ENCODE measurements at regions of chr5 and their contacts with region 1.

Region 1: GRCh38 chr5:132490486-132491367 is at the start of gene IRF1:
- DNase-seq: peak; percentile 99
- H3K4me3 Mint-ChIP-seq: peak within 1 kb of the TSS; percentile 87
- H3K27ac Mint-ChIP-seq: peak within 1 kb of the TSS; percentile 84
- H3K4me1 Mint-ChIP-seq: peaks cover 50% of the 10 kb centered on the region
- H3K27me3 Mint-ChIP-seq: no peaks in the 10 kb centered on the region
- CTCF ChIP-seq: peak; percentile 11
- total RNA-seq, gene IRF1: 18.7 and 23.0 TPM in 2 replicates

Region 2: DNA sequence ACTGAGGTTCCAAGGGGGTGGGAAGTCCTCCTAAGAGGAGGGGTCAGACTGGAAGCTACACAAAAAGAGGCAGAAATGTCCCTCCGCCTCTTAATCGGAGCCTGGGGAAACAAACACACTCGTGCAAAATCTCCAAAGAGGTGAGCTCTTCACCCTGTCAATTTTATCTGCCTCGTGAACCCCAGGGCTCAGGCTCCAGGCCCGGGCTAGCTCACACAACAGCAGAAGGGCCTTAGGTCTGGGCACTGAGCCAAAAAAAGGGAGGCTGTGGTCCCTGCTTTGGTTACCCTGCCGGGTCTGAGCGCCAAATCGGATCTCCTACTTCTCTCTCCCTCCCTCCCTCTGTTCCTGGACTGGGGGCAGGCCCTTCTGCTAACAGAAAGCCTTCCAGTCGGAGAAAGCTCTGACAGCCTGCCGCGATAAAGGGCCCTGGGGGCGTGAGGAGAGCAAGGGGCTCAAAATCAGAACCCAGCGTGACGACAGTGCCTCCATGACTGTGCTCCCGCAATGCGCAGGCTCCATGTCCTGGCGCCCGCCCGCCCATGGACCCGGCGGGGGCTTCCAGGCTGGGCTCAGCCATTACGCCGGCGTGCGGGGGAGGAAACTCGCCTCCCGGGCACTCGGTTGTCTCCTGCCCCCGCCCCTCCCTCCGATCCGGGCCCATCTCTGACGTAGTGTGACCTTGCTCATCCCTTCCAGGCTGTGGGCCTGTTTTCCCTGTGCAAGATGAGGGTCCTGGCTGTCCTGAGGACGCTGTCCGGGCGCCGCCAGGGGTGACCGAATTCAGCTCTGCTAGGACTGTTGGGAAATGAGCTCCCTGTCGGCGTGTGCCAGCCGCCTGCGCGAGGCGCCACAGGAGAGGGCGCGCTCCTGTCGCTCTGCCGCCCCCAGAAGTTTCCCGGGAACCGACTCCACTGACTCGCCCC is 197.4 kb before region 1 on chr5:
- CTCF ChIA-PET with region 1: interaction called, 3 read pairs
- POLR2A ChIA-PET with region 1: interaction called, 12 read pairs
- intact Hi-C with region 1: loop called (anchors 10 kb)
- DNase-seq: peak; percentile 91
- H3K4me3 Mint-ChIP-seq: peak overlapping the region; percentile 98
- H3K27ac Mint-ChIP-seq: peak overlapping the region; percentile 89
- H3K4me1 Mint-ChIP-seq: peaks cover 40% of the 10 kb centered on the region
- H3K27me3 Mint-ChIP-seq: no peaks in the 10 kb centered on the region
- CTCF ChIP-seq: peak; percentile 19

Region 3: DNA sequence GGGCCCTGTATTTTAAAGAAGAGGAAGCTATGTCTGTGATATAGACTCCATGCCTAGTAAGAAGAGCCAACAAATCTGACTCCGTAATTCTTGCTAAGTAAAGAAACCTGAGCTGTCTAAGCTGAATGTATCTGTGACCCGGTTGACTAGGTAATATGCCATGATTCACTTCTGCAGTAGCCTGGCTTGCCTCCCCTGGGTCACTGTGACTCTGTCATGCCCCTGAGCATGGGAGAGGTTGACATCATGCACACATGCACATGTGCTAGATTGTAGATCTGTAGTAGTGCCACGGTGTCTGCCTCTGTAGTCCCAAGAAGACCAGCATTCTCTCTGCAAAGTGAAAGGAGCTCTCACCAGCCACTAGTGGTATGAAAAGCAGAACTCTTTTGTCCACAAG is 112.1 kb before region 1 on chr5:
- CTCF ChIA-PET with region 1: interaction called, 359 read pairs
- POLR2A ChIA-PET with region 1: interaction called, 16 read pairs
- intact Hi-C with region 1: no loop called
- DNase-seq: no peak
- H3K4me3 Mint-ChIP-seq: no peak overlapping the region
- H3K27ac Mint-ChIP-seq: peak overlapping the region; percentile 58
- H3K4me1 Mint-ChIP-seq: peaks cover 57% of the 10 kb centered on the region
- H3K27me3 Mint-ChIP-seq: no peaks in the 10 kb centered on the region
- CTCF ChIP-seq: no peak

Region 4: GRCh38 chr5:132426525-132427138 is 64.1 kb before region 1 on chr5:
- CTCF ChIA-PET with region 1: interaction called, 19 read pairs
- POLR2A ChIA-PET with region 1: interaction called, 67 read pairs
- intact Hi-C with region 1: no loop called
- DNase-seq: peak; percentile 96
- H3K4me3 Mint-ChIP-seq: no peak overlapping the region
- H3K27ac Mint-ChIP-seq: peak overlapping the region; percentile 68
- H3K4me1 Mint-ChIP-seq: peaks cover 47% of the 10 kb centered on the region
- H3K27me3 Mint-ChIP-seq: no peaks in the 10 kb centered on the region
- CTCF ChIP-seq: peak; percentile 22

Region 5: DNA sequence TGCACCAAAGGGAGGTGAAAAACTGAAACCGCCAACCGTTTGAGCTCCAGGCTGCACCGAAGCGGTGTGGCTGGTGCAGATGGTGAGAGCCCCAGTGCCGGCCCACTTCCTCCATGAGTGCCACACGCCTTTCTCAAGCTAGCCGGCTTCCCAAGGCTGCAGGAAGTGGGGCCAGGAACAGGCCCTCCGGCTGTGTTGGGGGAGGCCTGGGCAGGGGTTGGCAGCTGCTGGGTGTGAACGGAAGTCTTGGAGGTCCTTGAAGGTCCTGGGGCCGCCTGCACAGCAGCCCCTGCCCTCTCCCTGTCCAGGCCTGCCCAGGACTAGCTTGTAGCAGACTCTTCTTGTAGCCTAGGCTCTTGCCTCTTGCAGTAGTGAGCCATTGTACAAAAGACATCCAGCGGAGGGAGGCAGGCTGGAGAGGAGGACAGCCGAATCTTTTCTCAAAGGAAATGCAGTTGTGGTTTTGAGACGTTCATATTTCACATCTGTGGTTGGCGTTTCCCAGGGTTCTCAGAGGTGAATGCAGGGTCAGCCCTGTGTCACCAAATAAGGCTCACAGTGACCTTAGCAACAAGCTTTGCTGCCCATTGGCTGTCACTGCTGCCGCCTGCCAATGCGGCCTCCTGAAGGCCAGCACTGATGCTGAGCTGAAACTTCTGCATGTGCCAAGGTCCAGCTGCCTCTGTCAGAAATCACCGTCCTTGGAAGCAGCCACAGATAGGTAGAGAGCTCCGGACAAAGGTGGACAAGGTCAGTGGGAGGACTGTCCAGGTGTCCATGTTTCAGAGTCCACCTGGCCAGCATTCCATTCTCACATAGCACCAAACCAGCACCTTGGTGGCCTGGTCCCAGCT is 24.1 kb before region 1 on chr5:
- CTCF ChIA-PET with region 1: interaction called, 6 read pairs
- POLR2A ChIA-PET with region 1: interaction called, 12 read pairs
- intact Hi-C with region 1: no loop called
- DNase-seq: no peak
- H3K4me3 Mint-ChIP-seq: no peak overlapping the region
- H3K27ac Mint-ChIP-seq: no peak overlapping the region
- H3K4me1 Mint-ChIP-seq: peaks cover 18% of the 10 kb centered on the region
- H3K27me3 Mint-ChIP-seq: no peaks in the 10 kb centered on the region
- CTCF ChIP-seq: no peak

Region 6: DNA sequence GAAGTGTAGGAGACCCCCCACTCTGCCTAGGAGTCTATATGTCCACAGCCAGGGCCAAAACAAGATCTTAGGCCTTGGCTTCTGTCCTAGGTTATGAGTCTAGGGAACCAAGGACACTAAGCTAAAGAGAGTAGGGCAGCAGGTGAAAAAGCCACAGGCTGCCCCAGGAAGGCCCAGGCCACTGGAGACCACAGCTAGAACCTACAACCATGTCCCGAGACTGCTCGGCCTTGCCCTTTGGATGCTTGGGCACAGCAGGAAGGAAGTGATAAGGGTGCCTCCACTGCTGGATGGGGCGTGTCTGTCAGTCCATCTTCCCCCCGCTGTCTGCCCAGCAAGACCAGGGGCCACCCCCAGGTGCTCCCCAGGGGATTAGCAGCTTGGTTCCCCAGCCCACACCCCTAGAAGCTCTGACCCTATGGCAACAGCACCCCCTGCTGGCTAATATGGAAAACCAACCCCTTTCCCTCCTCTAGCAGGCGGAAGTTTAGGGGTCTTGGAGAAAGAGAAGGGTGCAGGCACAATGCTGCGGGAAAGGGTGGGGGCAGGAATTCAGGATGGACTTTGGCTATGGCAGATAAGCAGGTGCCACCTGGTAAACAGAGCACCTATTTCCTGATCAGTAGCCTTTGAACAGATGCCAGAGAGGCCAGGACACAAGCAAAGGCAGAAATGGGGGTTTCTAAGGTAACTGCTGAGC is 10.4 kb after region 1 on chr5:
- CTCF ChIA-PET with region 1: interaction called, 58 read pairs
- POLR2A ChIA-PET with region 1: interaction called, 15 read pairs
- intact Hi-C with region 1: no loop called
- DNase-seq: peak; percentile 91
- H3K4me3 Mint-ChIP-seq: no peak overlapping the region
- H3K27ac Mint-ChIP-seq: peak overlapping the region; percentile 83
- H3K4me1 Mint-ChIP-seq: peaks cover 35% of the 10 kb centered on the region
- H3K27me3 Mint-ChIP-seq: no peaks in the 10 kb centered on the region
- CTCF ChIP-seq: peak; percentile 99

Measured in MCF 10A (cell line).